ENCODE measurements at regions of chr10 and their contacts with region 1.

Region 1: GRCh38 chr10:133139551-133140065 is 20.4 kb upstream of the KNDC1 start:
- DNase-seq: peak in 1 of 2 experiments; percentile 69
- H3K4me3 ChIP-seq: no peak overlapping the region
- H3K4me3 Mint-ChIP-seq: no peak overlapping the region
- H3K27ac Mint-ChIP-seq: no peak overlapping the region
- H3K4me1 ChIP-seq: peaks cover 19% of the 10 kb centered on the region
- H3K4me1 Mint-ChIP-seq: peaks cover 5% of the 10 kb centered on the region
- H3K27me3 ChIP-seq: no peaks in the 10 kb centered on the region
- H3K27me3 Mint-ChIP-seq: no peaks in the 10 kb centered on the region
- CTCF ChIP-seq: no peak

Region 2: GRCh38 chr10:131676511-131677421 is 1462.8 kb before region 1 on chr10:
- CTCF ChIA-PET with region 1: no interaction called
- POLR2A ChIA-PET with region 1: no interaction called
- intact Hi-C with region 1: no loop called
- DNase-seq: no peak
- H3K4me3 ChIP-seq: no peak overlapping the region
- H3K4me3 Mint-ChIP-seq: no peak overlapping the region
- H3K27ac Mint-ChIP-seq: no peak overlapping the region
- H3K4me1 ChIP-seq: no peaks in the 10 kb centered on the region
- H3K4me1 Mint-ChIP-seq: no peaks in the 10 kb centered on the region
- H3K27me3 ChIP-seq: no peaks in the 10 kb centered on the region
- H3K27me3 Mint-ChIP-seq: peaks cover 7% of the 10 kb centered on the region
- CTCF ChIP-seq: no peak

Region 3: GRCh38 chr10:132900176-132900756 is 239.3 kb before region 1 on chr10:
- CTCF ChIA-PET with region 1: interaction called, 16 read pairs
- POLR2A ChIA-PET with region 1: no interaction called
- intact Hi-C with region 1: no loop called
- DNase-seq: no peak
- H3K4me3 ChIP-seq: no peak overlapping the region
- H3K4me3 Mint-ChIP-seq: no peak overlapping the region
- H3K27ac Mint-ChIP-seq: no peak overlapping the region
- H3K4me1 ChIP-seq: no peaks in the 10 kb centered on the region
- H3K4me1 Mint-ChIP-seq: no peaks in the 10 kb centered on the region
- H3K27me3 ChIP-seq: no peaks in the 10 kb centered on the region
- H3K27me3 Mint-ChIP-seq: peaks cover 28% of the 10 kb centered on the region
- CTCF ChIP-seq: no peak

Region 4: GRCh38 chr10:133159950-133160819 is 20.6 kb after region 1 on chr10 and contains the start of gene KNDC1:
- CTCF ChIA-PET with region 1: interaction called, 13 read pairs
- POLR2A ChIA-PET with region 1: no interaction called
- intact Hi-C with region 1: no loop called
- DNase-seq: peak; percentile 51 to 71
- H3K4me3 ChIP-seq: peak within 1 kb of the TSS; percentile 60
- H3K4me3 Mint-ChIP-seq: peak within 1 kb of the TSS; percentile 66
- H3K27ac Mint-ChIP-seq: no peak within 1 kb of the TSS
- H3K4me1 ChIP-seq: peaks cover 39% of the 10 kb centered on the region
- H3K4me1 Mint-ChIP-seq: no peaks in the 10 kb centered on the region
- H3K27me3 ChIP-seq: no peaks in the 10 kb centered on the region; the same call in 1 of the 2 replicates
- H3K27me3 Mint-ChIP-seq: no peaks in the 10 kb centered on the region
- CTCF ChIP-seq: no peak
- total RNA-seq, gene KNDC1: 1.5 and 3.2 TPM in 2 replicates

Region 5: DNA sequence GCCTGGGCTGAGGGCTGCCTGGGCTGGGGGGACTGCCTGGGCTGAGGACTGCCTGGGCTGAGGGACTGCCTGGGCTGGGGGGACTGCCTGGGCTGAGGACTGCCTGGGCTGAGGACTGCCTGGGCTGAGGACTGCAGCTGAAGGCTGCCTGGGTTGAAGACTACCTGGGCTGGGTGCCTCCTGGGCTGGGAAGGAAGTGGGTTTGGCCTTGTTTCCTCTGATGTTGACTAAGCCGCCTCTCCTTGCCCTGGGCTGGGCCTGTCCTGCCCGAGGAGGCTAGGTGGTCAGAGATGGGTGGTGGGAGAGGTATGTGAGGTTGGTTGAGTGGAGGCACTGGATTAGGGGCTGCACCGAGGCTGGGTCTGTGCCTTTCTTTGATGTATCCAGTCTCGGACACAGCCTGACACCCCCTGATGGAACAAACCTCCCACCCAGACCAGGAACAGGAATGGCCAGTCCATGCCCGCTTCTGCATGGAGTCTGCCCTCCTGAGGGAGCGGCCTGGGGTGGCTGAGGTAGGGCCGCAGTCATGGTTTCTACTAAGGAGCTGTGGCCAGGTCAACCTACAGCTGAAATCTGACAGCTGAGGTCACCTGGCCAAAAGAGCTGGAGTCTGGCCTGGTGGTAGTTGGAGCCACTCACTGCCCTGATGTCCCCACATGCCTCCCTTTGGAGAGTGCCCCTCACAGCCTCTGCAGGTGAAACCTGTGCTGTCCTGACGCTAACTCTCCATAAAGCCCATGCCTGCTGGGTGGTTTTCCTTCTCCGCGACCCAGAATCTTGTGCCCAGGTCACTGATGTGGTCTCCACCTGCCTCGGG is 336.4 kb after region 1 on chr10:
- CTCF ChIA-PET with region 1: no interaction called
- POLR2A ChIA-PET with region 1: no interaction called
- intact Hi-C with region 1: no loop called
- DNase-seq: no peak
- H3K4me3 ChIP-seq: no peak overlapping the region
- H3K4me3 Mint-ChIP-seq: no peak overlapping the region
- H3K27ac Mint-ChIP-seq: no peak overlapping the region
- H3K4me1 ChIP-seq: no peaks in the 10 kb centered on the region
- H3K4me1 Mint-ChIP-seq: no peaks in the 10 kb centered on the region
- H3K27me3 ChIP-seq: peaks cover 3% of the 10 kb centered on the region
- H3K27me3 Mint-ChIP-seq: peaks cover 22% of the 10 kb centered on the region
- CTCF ChIP-seq: no peak